G401 (cell line): ENCODE measurements at regions of chr19 and their contacts with region 1.

Region 1: DNA sequence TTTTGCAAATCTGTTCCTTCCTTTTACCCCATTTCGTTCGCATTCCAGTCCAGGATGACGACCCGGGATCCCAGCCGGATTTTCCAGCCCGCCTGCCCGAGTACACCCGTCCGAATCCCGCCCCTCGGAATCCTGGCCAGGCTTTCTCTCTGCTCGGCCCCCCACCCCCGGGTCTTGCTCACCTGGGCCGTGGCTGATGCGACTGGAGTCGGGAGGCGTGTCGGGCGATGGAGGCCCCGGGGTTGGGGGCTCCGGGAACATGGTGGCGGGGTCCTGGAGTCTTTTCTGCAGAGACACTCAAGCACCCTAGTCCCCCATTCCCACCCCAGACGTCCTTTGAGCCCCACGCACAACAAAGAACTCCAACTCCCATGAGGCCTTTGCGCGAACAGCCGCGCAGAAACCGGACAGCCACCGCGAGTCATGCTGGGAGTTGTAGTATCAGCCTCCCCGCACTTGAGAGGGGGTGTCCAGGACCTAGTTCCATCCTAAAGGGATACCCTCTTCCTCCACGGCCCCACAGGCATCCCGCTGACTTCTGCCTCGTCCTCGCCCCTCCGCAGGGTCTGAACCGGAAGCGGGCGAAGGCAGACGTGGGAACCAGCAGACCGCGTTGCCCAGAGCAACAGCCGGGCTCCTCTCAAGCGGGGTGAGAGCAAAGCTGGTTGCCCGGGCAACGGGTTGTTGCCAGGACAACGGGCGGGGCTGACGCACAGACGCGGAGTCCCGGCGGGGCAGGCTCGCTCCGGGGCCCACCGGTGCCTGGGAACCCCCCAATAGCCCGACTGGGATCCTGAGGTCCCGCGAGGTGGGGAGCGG is 1.1 kb downstream of the SYT5 start:
- DNase-seq: peak; percentile 91

Region 2: DNA sequence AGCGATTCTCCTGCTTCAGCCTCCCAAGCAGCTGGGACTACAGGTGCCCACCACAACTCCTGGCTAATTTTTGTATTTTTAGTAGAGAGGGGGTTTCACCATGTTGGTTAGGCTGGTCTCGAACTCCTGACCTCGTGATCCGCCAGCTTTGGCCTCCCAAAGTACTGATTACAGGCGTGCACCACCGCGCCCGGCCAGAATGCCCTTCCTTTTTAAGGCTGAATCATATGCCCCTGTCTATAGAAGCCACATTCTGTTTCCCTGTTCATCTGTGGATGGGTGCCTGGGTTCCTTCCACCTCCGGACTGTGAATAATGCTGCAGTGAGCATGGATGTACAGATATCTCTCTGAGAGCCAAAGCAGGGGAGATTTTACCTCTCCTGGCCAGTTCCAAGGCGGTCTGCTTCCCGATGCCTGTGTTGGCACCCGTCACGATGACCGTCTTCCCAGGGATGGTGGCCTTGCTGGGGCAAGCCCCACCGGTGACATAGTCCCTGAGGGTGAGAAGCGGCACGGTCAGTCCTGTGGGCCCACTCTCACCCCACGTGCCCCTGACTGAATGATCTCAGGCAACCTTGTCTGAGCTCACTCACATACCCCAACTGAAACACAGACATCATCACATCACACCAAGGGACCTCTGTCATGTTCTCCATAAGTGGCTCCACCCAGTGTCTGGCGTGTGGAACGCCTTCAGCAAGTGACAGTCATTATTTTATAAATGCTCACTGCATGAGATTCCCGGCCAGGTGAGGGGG is 120.0 kb before region 1 on chr19:
- in situ Hi-C with region 1: no loop called
- DNase-seq: no peak

Region 3: GRCh38 chr19:55080968-55081772 is 97.8 kb before region 1 on chr19:
- in situ Hi-C with region 1: no loop called
- DNase-seq: peak; percentile 24

Region 4: DNA sequence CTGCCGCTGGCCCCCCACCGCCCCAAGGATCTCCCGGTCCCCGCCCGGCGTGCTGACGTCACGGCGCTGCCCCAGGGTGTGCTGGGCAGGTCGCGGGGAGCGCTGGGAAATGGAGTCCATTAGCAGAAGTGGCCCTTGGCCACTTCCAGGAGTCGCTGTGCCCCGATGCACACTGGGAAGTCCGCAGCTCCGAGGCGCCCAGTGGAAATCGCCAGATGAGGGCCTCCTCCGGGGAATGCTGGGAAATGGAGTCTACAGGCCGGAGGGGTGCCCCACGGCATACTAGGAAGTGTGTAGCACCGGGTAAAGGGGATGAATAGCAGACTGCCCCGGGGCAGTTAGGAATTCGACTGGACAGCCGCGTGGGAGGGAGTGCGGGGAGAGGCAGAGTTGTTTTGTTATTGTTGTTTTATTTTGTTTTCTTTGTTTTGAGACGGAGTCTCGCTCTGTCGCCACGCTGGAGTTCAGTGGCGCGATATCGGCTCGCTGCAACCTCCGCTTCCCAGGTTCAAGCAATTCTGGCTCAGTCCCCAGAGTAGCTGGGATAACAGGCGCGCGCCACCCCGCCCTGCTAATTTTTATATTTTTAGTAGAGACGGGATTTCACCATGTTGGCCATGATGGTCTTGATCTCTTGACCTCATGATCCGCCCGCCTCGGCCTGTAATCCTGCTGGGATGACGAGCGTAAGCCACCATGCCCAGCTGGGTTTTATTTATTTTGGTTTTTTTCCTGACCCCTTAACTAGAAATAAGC is 61.2 kb before region 1 on chr19 and contains the start of gene PPP1R12C:
- in situ Hi-C with region 1: loop called (anchors 10 kb)
- DNase-seq: peak; percentile 99
- total RNA-seq, gene PPP1R12C: 77.4 and 81.7 TPM in 2 replicates

Region 5: DNA sequence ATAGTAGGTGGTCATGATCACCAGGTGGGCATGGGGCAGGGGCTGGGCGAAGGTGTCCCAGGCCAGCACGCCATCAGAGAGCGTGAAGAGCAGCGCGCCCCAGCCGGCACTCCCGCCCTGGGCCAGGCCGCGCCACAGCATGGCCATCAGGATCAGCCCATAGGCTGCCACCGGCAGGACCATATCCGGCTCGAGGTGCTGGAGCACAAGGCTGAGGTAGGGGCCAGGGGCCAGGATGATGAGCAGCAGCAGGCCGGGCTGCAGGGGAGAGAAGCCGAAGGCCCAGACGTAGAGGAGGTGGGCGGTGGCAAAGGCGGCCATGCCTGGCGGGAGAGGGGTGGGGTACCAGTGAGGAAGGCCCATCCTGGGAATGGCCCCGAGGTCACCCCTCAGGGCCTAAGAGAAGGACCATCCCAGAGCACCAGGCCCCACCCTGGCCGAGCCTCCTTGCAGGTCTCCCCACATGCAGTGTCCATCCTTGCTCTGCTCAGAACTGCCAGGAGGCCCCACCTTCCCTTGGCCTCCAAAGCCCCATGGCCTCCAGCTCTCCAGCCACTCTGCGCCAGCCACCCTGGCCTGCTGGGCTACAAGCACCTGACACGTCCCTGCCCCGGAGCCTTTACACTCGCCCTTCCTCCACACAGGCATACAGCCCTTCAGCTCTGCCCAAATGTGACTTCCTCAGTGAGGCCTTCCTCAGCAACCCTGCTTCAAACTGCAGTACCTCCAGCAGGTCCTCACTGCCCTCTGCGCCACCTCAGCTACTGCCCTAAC is 48.4 kb after region 1 on chr19:
- in situ Hi-C with region 1: no loop called
- DNase-seq: no peak

Region 6: DNA sequence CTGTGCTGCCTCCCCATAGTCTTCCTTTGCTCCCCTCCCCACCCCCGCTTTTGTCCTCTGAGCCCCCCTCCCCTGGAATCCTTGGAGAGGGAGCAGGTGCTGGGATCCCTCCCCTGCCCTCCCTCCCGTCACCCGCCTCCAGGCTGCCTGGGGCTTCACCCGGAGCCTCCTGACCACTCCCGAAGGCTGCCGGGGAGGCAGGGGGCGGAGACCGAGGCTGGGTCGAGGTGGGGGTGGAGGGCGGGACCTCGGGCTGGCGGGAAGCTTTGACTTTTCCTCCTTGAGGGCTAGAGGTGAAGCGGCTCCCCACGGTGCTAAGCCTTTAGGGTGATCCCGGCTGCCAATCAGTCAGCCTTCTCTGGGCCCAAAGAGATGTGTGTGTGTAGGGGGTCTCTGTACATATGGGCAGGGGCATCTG is 162.2 kb after region 1 on chr19:
- in situ Hi-C with region 1: loop called (anchors 10 kb)
- DNase-seq: peak; percentile 66